Endothelial cell of umbilical vein (primary cell): ENCODE measurements at regions of chr2 and their contacts with region 1.

Region 1: DNA sequence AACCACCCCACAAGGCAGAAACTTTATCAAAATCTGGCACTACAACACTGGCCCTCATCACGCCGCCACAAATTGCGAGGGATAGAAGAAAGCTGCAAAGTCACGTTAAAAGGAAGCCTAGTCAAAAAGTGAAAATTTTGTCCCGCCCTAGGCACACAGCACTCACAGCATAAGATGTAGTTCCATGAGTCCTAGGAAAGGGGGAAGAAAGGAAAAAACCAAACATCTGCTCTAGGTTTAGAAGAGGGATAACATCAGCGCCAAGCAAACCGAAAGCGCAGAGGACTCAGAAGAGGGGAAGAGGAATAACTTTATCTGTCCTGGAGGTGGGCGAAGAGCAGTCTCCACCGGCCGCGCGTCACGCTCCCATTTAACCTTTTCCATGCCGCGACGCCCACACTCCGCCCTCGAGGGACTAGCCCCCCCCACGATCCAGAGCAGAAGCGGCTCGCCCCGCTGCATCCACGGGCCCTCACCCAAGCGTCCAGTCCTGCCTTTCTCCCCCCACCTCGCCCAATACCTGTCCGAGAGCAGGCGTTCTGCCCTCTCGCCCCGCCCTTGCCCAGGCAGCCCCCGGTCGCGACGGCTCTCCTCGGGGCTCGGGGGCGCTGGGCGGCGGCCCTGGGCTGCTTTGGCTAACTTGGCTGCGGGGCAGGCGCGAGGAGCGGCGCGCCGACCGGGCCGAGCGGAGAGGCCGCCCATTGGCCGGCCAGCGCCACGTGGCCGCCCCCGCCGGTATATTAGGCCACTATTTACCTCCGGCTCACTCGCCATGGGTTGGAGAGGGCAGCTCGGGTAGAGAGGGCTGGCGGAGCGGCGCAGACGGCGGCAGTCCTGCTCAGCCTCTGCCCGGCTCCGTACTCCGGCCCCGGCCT is at the start of gene HOXD1:
- DNase-seq: peak; percentile 83
- H3K4me3 ChIP-seq: peak within 1 kb of the TSS; percentile 86 to 96 (median 93)
- H3K27ac ChIP-seq: peak within 1 kb of the TSS; percentile 74
- H3K4me1 ChIP-seq: peaks cover 33% of the 10 kb centered on the region
- H3K27me3 ChIP-seq: no peaks in the 10 kb centered on the region
- CTCF ChIP-seq: no peak
- POLR2A ChIP-seq: peak; percentile 86
- total RNA-seq, gene HOXD1: 10.4 and 14.1 TPM in 2 replicates

Region 2: GRCh38 chr2:176206682-176207081 is 18.5 kb after region 1 on chr2:
- CTCF ChIA-PET with region 1: interaction called, 5 read pairs
- POLR2A ChIA-PET with region 1: interaction called, 15 read pairs
- dilution Hi-C with region 1: no loop called
- intact Hi-C with region 1: no loop called
- DNase-seq: no peak
- H3K4me3 ChIP-seq: no peak overlapping the region
- H3K27ac ChIP-seq: no peak overlapping the region
- H3K4me1 ChIP-seq: no peaks in the 10 kb centered on the region
- H3K27me3 ChIP-seq: no peaks in the 10 kb centered on the region
- CTCF ChIP-seq: no peak
- POLR2A ChIP-seq: no peak

Region 3: DNA sequence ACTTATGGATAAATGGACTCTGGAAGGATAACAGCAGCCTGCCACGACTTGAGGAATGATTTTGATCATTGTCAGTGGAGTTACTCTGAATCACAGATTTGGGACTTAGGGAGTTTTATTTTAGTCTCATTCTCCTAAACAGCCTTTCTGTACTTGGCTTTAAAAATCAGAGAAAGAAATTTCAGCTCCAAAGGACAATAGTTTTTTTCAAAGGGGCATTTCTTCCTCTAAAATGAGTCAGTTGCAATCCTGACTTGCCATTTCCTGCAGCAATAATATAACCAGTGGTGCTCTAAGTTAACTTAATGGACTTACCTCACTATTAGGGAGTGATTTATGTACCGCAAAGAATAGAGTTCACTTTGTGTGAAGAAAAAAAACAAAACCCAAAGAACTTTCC is 46.0 kb after region 1 on chr2:
- CTCF ChIA-PET with region 1: interaction called, 3 read pairs
- POLR2A ChIA-PET with region 1: no interaction called
- dilution Hi-C with region 1: no loop called
- intact Hi-C with region 1: loop called (anchors 2 kb)
- DNase-seq: peak; percentile 81
- H3K4me3 ChIP-seq: no peak overlapping the region
- H3K27ac ChIP-seq: peak overlapping the region; percentile 72
- H3K4me1 ChIP-seq: peaks cover 16% of the 10 kb centered on the region
- H3K27me3 ChIP-seq: no peaks in the 10 kb centered on the region
- CTCF ChIP-seq: no peak
- POLR2A ChIP-seq: no peak

Region 4: GRCh38 chr2:176280867-176281658 is 92.9 kb after region 1 on chr2:
- CTCF ChIA-PET with region 1: no interaction called
- POLR2A ChIA-PET with region 1: no interaction called
- dilution Hi-C with region 1: no loop called
- intact Hi-C with region 1: loop called (anchors 5 kb)
- DNase-seq: no peak
- H3K4me3 ChIP-seq: no peak overlapping the region
- H3K27ac ChIP-seq: no peak overlapping the region
- H3K4me1 ChIP-seq: peaks cover 19% of the 10 kb centered on the region
- H3K27me3 ChIP-seq: no peaks in the 10 kb centered on the region
- CTCF ChIP-seq: no peak
- POLR2A ChIP-seq: no peak

Region 5: DNA sequence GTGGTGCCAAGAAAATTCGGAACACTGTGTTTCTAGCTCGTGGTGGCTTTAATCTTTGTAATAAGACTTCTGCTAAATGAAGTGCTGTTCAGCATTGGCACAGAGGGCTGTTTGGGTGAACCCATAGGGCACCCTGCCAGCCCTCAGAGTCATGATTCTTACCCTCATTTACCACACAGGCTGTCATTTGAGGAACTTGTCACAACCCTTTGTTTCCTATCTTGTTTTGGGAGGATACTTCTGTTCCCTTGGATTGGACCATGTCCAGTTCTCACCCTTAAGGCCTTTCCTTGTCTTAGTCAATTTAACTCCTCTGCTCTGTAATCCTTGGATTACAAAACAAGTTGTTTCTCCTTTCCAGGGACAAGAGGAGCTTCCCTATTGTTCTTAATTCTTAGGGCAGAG is 306.8 kb after region 1 on chr2:
- CTCF ChIA-PET with region 1: no interaction called
- POLR2A ChIA-PET with region 1: no interaction called
- dilution Hi-C with region 1: no loop called
- intact Hi-C with region 1: no loop called
- DNase-seq: no peak
- H3K4me3 ChIP-seq: no peak overlapping the region
- H3K27ac ChIP-seq: no peak overlapping the region
- H3K4me1 ChIP-seq: no peaks in the 10 kb centered on the region
- H3K27me3 ChIP-seq: no peaks in the 10 kb centered on the region
- CTCF ChIP-seq: no peak
- POLR2A ChIP-seq: no peak

Region 6: GRCh38 chr2:176638167-176639015 is 450.3 kb after region 1 on chr2:
- CTCF ChIA-PET with region 1: interaction called, 10 read pairs
- POLR2A ChIA-PET with region 1: no interaction called
- dilution Hi-C with region 1: no loop called
- intact Hi-C with region 1: loop called (anchors 2 kb)
- DNase-seq: peak; percentile 74
- H3K4me3 ChIP-seq: peak overlapping the region; percentile 9 to 59 (median 55)
- H3K27ac ChIP-seq: peak overlapping the region; percentile 79
- H3K4me1 ChIP-seq: peaks cover 25% of the 10 kb centered on the region
- H3K27me3 ChIP-seq: no peaks in the 10 kb centered on the region
- CTCF ChIP-seq: peak; percentile 63 to 83
- POLR2A ChIP-seq: no peak